Sciatic nerve (tissue), 2 donors: ENCODE measurements at regions of chr18 and their contacts with region 1.

Region 1: DNA sequence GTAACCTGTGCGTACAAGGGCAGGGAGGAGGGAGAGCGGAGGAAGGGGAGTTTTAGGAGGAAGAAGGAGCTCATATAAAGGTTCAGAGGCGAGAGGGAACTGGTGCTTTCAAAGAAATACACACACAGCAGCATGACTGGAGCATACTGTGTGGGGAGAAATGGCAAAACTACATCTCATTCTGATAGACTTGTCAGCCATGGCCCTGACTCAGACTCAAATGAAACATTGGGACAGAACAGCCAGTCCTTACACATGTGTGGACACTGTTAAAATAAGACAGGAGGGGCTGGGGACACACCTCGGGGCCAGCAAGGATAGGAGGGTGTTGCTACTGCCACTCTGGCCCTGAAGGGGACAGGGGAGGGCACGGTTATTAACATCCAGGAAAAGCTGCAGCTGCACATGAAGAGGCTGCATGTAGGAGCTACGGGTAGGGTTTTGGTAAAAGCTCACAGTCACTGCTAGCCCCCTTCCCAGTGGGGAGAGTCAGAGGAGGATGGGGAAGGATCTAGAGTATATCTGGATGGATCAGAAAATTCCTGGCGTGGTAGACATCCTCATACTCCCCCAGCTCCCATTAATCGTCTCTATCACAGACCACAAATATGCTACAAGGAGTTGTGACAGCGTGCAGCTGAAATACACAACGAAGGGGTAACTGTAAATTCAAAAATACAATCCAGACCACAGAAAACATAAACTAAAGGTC is 110.5 kb downstream of the GATA6 start:
- DNase-seq: no peak
- ATAC-seq: no peak

Region 2: DNA sequence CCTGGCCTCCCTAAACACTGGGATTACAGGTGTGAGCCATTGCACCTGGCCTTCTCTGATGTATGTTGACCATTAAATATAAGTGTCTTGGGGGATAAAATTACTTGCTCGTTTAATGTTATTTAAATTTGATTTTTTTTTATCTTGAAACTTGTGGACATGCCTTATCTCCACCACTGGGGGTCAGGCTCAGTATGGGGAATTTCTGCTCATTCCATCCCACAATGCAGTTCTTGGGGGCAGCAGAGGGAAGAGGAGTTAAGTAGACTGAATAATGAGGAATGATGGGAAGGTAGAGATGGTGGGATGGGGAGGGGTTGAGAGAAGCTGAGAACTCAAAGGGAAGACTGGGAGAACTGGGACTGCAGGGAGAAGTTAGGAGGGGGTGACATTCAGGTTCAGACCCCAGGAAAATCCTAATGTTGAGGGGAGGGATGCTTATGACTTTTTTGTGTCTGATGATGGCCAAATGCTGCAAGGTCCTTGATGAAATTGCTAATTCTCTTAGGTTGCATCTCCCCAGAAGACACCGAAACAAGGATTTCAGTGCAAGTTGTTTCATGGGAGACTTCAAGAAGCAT is 365.1 kb before region 1 on chr18:
- intact Hi-C with region 1: no loop called
- DNase-seq: no peak
- ATAC-seq: no peak

Region 3: GRCh38 chr18:22223254-22223960 is 56.5 kb before region 1 on chr18:
- intact Hi-C with region 1: loop called (anchors 10 kb)
- DNase-seq: no peak
- ATAC-seq: no peak